ENCODE measurements at regions of chr21 and their contacts with region 1.

Region 1: DNA sequence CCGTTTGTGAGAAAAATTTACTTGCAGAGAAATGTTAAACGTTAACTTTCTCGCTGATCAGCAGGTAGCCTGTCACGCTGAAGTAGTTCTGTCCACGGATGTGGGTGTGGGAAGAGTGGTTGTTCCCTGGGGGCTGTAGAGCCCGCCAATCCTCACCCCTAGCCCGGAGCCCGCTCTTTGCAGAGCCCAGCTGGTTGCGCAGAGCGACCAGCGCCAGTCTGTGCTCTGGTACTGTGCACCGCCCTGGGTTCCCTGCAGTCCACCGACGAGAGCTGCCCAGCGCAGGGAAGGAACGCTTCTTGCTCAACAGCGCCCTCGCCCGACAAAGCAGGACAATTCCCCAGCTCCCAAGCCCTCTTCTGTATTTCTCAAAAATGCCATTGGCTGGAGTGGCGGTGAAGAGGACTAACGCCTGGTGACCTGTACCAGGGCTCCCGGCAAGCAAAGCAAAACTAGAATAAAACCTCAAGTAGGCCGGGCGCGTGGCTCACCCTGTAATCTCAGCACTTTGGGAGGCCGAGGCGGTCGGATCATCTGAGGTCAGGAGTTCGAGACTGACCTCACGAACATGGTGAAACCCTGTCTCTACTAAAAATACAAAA is 3.3 kb downstream of the RIPPLY3 start:
- DNase-seq: no peak
- H3K4me3 ChIP-seq: peak overlapping the region; percentile 29
- CTCF ChIP-seq: peak; percentile 95

Region 2: GRCh38 chr21:36630485-36631206 is 379.2 kb before region 1 on chr21:
- CTCF ChIA-PET with region 1: no interaction called
- POLR2A ChIA-PET with region 1: no interaction called
- DNase-seq: no peak
- H3K4me3 ChIP-seq: no peak overlapping the region
- CTCF ChIP-seq: peak; percentile 70

Region 3: DNA sequence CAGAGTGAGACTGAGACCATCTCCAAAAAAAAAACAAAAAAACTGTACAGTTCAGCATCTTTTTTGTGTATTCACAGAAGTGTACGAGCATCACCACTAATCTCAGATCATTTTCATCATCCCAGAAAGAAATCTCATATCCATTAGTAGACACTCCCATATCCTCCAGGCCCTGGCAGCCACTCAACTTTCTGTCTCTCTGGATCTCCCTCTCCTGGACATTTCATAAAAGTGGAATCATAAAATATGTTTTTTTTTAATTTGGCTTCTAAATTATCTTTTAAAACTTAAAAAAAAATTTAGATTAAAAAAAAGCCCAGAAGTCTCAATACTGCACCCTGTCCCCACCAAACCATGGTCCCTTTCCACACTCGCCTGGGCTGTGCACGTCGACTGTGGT is 18.7 kb after region 1 on chr21:
- CTCF ChIA-PET with region 1: interaction called, 16 read pairs
- POLR2A ChIA-PET with region 1: no interaction called
- DNase-seq: no peak
- H3K4me3 ChIP-seq: no peak overlapping the region
- CTCF ChIP-seq: no peak